ENCODE measurements at regions of chr13 and their contacts with region 1.

Region 1: GRCh38 chr13:35157143-35157755 is 215.2 kb downstream of the NBEA start:
- DNase-seq: peak; percentile 19 to 49 (median 31)
- ATAC-seq: peak; percentile 59
- H3K4me3 ChIP-seq: no peak overlapping the region
- H3K27ac ChIP-seq: no peak overlapping the region
- H3K4me1 ChIP-seq: no peaks in the 10 kb centered on the region
- H3K27me3 ChIP-seq: no peaks in the 10 kb centered on the region
- CTCF ChIP-seq: peak; percentile 28 to 78 (median 70)
- POLR2A ChIP-seq: no peak

Region 2: GRCh38 chr13:33799950-33800592 is 1357.2 kb before region 1 on chr13:
- intact Hi-C with region 1: loop called (anchors 10 kb)
- DNase-seq: no peak
- ATAC-seq: peak; percentile 49
- H3K4me3 ChIP-seq: no peak overlapping the region
- H3K27ac ChIP-seq: no peak overlapping the region
- H3K4me1 ChIP-seq: peaks cover 21% of the 10 kb centered on the region
- H3K27me3 ChIP-seq: no peaks in the 10 kb centered on the region
- CTCF ChIP-seq: peak in 6 of 7 experiments; percentile 19 to 61 (median 42)
- POLR2A ChIP-seq: no peak

Region 3: GRCh38 chr13:35554972-35555623 is 397.8 kb after region 1 on chr13:
- intact Hi-C with region 1: no loop called
- DNase-seq: no peak
- ATAC-seq: no peak
- H3K4me3 ChIP-seq: no peak overlapping the region
- H3K27ac ChIP-seq: no peak overlapping the region
- H3K4me1 ChIP-seq: no peaks in the 10 kb centered on the region
- H3K27me3 ChIP-seq: no peaks in the 10 kb centered on the region
- CTCF ChIP-seq: no peak
- POLR2A ChIP-seq: no peak